ENCODE measurements at regions of chr3 and their contacts with region 1.

Region 1: DNA sequence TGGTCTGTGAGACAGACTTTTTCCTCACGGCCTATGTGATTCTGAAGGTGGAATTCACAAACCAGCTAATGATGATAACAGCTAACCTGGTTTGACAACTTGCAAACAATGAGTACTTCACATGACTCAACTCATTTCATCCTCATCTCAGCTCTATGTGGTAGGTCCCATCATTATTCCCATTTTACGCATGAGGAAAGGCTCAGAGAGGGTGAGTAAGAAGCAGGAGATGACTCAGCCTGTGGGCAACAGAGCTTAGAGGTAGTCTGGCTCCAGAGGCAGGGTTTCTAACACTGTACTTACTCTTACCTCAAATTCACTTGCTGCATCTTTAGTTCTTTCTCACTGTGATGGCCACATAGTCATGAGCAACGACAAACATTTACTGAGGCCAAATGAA is 25.8 kb upstream of the PSMD6 start:
- DNase-seq: no peak
- H3K4me3 ChIP-seq: no peak overlapping the region
- H3K27ac ChIP-seq: no peak overlapping the region
- H3K4me1 ChIP-seq: no peaks in the 10 kb centered on the region
- H3K27me3 ChIP-seq: no peaks in the 10 kb centered on the region
- CTCF ChIP-seq: no peak

Region 2: DNA sequence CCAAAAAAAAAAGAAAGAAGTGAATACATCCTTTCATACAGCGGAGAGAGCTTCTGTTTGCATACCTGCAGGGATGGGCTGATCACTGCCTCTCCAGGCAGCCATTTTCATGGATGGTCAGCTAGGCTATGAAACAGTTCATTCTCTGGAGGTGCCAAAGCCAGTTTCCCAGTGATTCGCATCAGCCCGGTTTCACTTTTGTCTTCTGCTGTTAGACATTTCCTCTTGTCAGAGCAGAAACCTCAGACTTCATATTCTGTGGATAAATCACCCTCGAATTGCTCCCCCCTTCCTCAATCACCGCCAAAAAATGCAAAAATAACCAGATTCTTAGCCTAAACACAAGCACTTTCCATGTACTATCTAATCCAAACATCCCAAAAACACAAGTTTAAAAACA is 413.1 kb after region 1 on chr3:
- intact Hi-C with region 1: loop called (anchors 10 kb)
- DNase-seq: peak in 1 of 5 donors; percentile 31
- H3K4me3 ChIP-seq: no peak overlapping the region
- H3K27ac ChIP-seq: no peak overlapping the region
- H3K4me1 ChIP-seq: peaks cover 0 to 3% (median 0%) of the 10 kb centered on the region in 3 donors
- H3K27me3 ChIP-seq: no peaks in the 10 kb centered on the region
- CTCF ChIP-seq: no peak

Measured in kidney (tissue), 22 donors.